Naive thymus-derived CD4-positive, alpha-beta T cell (primary cell): ENCODE measurements at regions of chr6 and their contacts with region 1.

Region 1: GRCh38 chr6:41779793-41780545 is at the start of gene FRS3:
- DNase-seq: peak; percentile 96 to 100 (median 97)
- ATAC-seq: peak; percentile 99
- H3K4me3 ChIP-seq: peak within 1 kb of the TSS; percentile 59
- H3K4me3 Mint-ChIP-seq: peak within 1 kb of the TSS; percentile 87 to 95 (median 90)
- H3K27ac ChIP-seq: peak within 1 kb of the TSS; percentile 65
- H3K27ac Mint-ChIP-seq: peak within 1 kb of the TSS; percentile 47 to 86 (median 72)
- H3K4me1 ChIP-seq: peaks cover 7 to 9% of the 10 kb centered on the region in 2 donors
- H3K4me1 Mint-ChIP-seq: peaks cover 10 to 26% (median 22%) of the 10 kb centered on the region in 7 donors
- H3K27me3 ChIP-seq: no peaks in the 10 kb centered on the region
- H3K27me3 Mint-ChIP-seq: peaks cover 0 to 24% (median 0%) of the 10 kb centered on the region in 5 donors
- total RNA-seq, gene FRS3: 5.1 to 10.6 (median 5.5) TPM

Region 2: DNA sequence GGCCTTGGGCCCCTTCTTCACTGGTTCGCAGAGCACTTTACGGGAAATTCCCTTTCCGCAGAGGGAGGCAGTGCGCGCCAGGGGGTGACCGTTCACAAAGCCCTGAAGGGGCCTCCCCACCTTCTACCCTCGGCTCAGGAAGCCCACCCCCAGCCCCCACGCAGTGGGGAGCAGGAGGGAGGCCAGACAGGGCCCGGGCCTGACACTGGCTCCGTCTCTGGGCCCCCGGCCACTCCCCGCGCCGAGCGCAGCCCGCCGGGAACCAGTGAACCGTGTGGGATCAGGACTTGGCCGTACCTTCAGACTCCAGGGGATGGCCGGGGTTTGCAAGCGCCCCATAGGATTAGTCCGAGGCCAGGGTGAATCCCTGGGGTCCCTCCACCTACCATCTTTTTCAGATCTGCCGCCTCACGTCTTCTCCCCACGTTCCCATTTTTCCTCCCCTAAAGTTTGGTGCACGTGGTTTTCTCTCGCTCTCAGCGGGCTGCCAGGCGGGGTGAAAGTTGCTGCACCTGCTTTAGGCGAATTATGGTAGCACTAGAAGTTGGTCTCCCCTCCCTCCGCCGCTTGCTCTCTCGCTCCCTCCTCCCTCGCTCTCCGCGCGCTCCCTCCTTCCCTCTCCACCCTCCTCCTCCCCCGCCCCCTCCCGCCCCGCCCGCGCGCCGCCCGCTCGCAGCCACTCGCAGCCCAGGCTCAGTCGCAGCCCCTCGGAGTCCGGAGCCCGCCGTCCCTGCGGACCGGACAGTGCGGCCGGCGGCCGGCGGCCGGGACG is 234.1 kb before region 1 on chr6 and contains the start of gene FOXP4:
- CTCF ChIA-PET with region 1: no interaction called
- POLR2A ChIA-PET with region 1: no interaction called
- intact Hi-C with region 1: no loop called
- DNase-seq: peak; percentile 45 to 83 (median 76)
- ATAC-seq: peak; percentile 95
- H3K4me3 ChIP-seq: peak within 1 kb of the TSS; percentile 64
- H3K4me3 Mint-ChIP-seq: peak within 1 kb of the TSS; percentile 91 to 96 (median 94)
- H3K27ac ChIP-seq: peak within 1 kb of the TSS; percentile 19
- H3K27ac Mint-ChIP-seq: peak within 1 kb of the TSS in 8 of 9 donors; percentile 7 to 86 (median 66)
- H3K4me1 ChIP-seq: peaks cover 20 to 27% of the 10 kb centered on the region in 2 donors
- H3K4me1 Mint-ChIP-seq: peaks cover 6 to 42% (median 25%) of the 10 kb centered on the region in 7 donors
- H3K27me3 ChIP-seq: peaks cover 2 to 9% of the 10 kb centered on the region in 2 donors
- H3K27me3 Mint-ChIP-seq: peaks cover 10 to 73% (median 16%) of the 10 kb centered on the region in 5 donors
- total RNA-seq, gene FOXP4: 3.1 to 7.6 (median 4.9) TPM

Region 3: DNA sequence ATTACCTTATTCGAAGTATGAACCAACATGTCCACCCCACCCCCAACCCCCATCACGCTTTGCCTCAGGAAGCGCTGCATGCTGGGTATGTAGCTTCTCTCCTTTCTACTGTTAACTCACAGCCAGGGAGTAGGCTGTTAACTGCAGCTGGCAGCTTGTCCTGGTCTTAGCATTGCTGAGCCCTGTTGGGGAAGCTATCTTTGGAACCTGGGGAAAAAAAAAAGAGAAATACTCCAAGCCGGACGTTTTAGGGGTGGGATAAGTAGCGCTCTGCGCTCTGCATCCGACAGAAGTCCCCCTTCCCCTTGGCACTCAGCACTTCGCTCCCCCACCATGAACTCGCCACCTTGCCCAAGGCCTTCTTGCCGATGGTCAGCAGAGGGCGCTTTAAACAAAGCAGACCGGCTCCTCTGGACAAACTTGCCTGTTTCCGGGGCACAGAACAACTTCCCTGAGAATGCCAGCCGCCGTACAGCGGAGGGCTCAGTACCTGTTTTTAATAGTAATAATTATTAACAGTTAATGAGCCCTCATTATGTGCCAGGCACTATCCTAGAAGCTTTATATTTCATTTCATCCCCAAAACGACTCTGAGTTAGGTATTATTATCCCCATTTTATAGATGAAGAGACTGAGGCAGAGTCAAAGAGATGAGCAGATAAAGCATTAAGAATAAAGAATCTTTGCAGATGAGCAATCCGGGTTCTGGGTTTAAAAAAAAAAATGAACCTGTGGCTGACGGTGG is 176.9 kb before region 1 on chr6:
- CTCF ChIA-PET with region 1: interaction called, 6 read pairs
- POLR2A ChIA-PET with region 1: no interaction called
- intact Hi-C with region 1: loop called (anchors 1 kb)
- DNase-seq: peak; percentile 49 to 78 (median 68)
- ATAC-seq: peak; percentile 86
- H3K4me3 ChIP-seq: no peak overlapping the region
- H3K4me3 Mint-ChIP-seq: peak overlapping the region in 6 of 10 donors; percentile 24 to 56 (median 34)
- H3K27ac ChIP-seq: no peak overlapping the region
- H3K27ac Mint-ChIP-seq: no peak overlapping the region
- H3K4me1 ChIP-seq: peaks cover 4 to 7% of the 10 kb centered on the region in 2 donors
- H3K4me1 Mint-ChIP-seq: peaks cover 4 to 7% (median 5%) of the 10 kb centered on the region in 7 donors
- H3K27me3 ChIP-seq: no peaks in the 10 kb centered on the region
- H3K27me3 Mint-ChIP-seq: peaks cover 0 to 7% (median 0%) of the 10 kb centered on the region in 5 donors

Region 4: GRCh38 chr6:41936073-41936837 is 156.3 kb after region 1 on chr6:
- CTCF ChIA-PET with region 1: no interaction called
- POLR2A ChIA-PET with region 1: no interaction called
- intact Hi-C with region 1: loop called (anchors 1 to 5 kb)
- DNase-seq: peak in 8 of 9 donors; percentile 52 to 72 (median 63)
- ATAC-seq: peak; percentile 79
- H3K4me3 ChIP-seq: peak overlapping the region; percentile 34
- H3K4me3 Mint-ChIP-seq: peak overlapping the region; percentile 64 to 100 (median 90)
- H3K27ac ChIP-seq: peak overlapping the region; percentile 76
- H3K27ac Mint-ChIP-seq: peak overlapping the region; percentile 85 to 95 (median 90)
- H3K4me1 ChIP-seq: peaks cover 57 to 61% of the 10 kb centered on the region in 2 donors
- H3K4me1 Mint-ChIP-seq: peaks cover 48 to 81% (median 74%) of the 10 kb centered on the region in 7 donors
- H3K27me3 ChIP-seq: no peaks in the 10 kb centered on the region
- H3K27me3 Mint-ChIP-seq: no peaks in the 10 kb centered on the region

Region 5: DNA sequence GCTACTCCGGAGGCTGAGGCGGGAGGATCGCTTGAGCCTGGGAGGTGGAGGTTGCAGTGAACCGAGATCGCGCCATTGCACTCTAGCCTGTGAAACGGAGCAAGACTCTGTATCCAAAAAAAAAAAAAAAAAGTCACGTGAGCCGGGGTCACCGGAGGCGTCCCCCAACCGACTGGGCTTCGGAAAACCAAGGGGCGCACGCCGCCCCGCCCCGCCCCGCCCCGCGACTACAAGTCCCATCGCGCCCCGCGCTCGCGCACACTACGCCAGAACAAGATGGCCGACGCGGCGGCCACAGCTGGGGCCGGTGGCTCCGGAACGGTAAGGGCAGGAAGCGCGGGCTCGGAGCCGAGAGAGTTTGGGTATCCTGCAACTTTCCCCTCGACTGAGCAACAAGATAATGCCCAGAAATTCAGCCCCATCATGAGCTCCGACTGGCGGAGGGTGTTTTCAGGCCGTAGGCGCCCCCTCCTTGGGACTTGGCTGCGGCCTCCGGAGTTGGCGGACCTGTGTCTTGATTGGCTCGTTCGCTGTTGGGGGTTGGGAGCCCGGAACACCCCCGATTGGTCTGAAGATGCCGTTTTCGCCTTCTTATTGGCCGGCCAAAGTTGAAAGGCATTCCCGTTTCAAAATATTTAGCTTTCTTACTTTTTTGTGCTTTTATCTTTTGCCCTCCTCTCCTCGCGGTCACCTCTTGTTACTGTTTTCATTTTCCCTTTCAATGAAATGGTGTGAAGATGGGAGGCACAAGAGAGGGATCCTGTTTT is 270.5 kb after region 1 on chr6 and contains the start of gene TAF8:
- CTCF ChIA-PET with region 1: interaction called, 49 read pairs
- POLR2A ChIA-PET with region 1: interaction called, 79 read pairs
- intact Hi-C with region 1: loop called in 1 of 2 experiments (anchors 1 kb)
- DNase-seq: peak; percentile 76 to 89 (median 87)
- ATAC-seq: peak; percentile 80
- H3K4me3 ChIP-seq: peak within 1 kb of the TSS; percentile 98
- H3K4me3 Mint-ChIP-seq: peak within 1 kb of the TSS; percentile 89 to 99 (median 99)
- H3K27ac ChIP-seq: peak within 1 kb of the TSS; percentile 78
- H3K27ac Mint-ChIP-seq: peak within 1 kb of the TSS; percentile 93 to 98 (median 97)
- H3K4me1 ChIP-seq: peaks cover 24 to 27% of the 10 kb centered on the region in 2 donors
- H3K4me1 Mint-ChIP-seq: peaks cover 36 to 70% (median 51%) of the 10 kb centered on the region in 7 donors
- H3K27me3 ChIP-seq: no peaks in the 10 kb centered on the region
- H3K27me3 Mint-ChIP-seq: no peaks in the 10 kb centered on the region
- total RNA-seq, gene TAF8: 41.6 to 58.2 (median 50.8) TPM

Region 6: GRCh38 chr6:42104095-42104806 is 324.3 kb after region 1 on chr6:
- CTCF ChIA-PET with region 1: no interaction called
- POLR2A ChIA-PET with region 1: no interaction called
- intact Hi-C with region 1: loop called (anchors 1 to 2 kb)
- DNase-seq: peak; percentile 39 to 79 (median 73)
- ATAC-seq: peak; percentile 90
- H3K4me3 ChIP-seq: peak overlapping the region; percentile 68
- H3K4me3 Mint-ChIP-seq: peak overlapping the region; percentile 66 to 89 (median 70)
- H3K27ac ChIP-seq: peak overlapping the region; percentile 41
- H3K27ac Mint-ChIP-seq: peak overlapping the region in 5 of 9 donors; percentile 20 to 78 (median 58)
- H3K4me1 ChIP-seq: peaks cover 0 to 4% of the 10 kb centered on the region in 2 donors
- H3K4me1 Mint-ChIP-seq: peaks cover 0 to 28% (median 9%) of the 10 kb centered on the region in 7 donors
- H3K27me3 ChIP-seq: no peaks in the 10 kb centered on the region
- H3K27me3 Mint-ChIP-seq: no peaks in the 10 kb centered on the region

Region 7: GRCh38 chr6:42217519-42218367 is 437.8 kb after region 1 on chr6 and contains the start of gene MRPS10:
- CTCF ChIA-PET with region 1: interaction called, 7 read pairs
- POLR2A ChIA-PET with region 1: interaction called, 3 read pairs
- intact Hi-C with region 1: loop called (anchors 1 kb)
- DNase-seq: peak; percentile 72 to 92 (median 87)
- ATAC-seq: peak; percentile 100
- H3K4me3 ChIP-seq: peak within 1 kb of the TSS; percentile 96
- H3K4me3 Mint-ChIP-seq: peak within 1 kb of the TSS; percentile 92 to 100 (median 98)
- H3K27ac ChIP-seq: peak within 1 kb of the TSS; percentile 77
- H3K27ac Mint-ChIP-seq: peak within 1 kb of the TSS; percentile 87 to 99 (median 97)
- H3K4me1 ChIP-seq: peaks cover 9 to 14% of the 10 kb centered on the region in 2 donors
- H3K4me1 Mint-ChIP-seq: peaks cover 7 to 34% (median 24%) of the 10 kb centered on the region in 7 donors
- H3K27me3 ChIP-seq: no peaks in the 10 kb centered on the region
- H3K27me3 Mint-ChIP-seq: no peaks in the 10 kb centered on the region
- total RNA-seq, gene MRPS10: 17.0 to 30.3 (median 25.3) TPM

Region 8: DNA sequence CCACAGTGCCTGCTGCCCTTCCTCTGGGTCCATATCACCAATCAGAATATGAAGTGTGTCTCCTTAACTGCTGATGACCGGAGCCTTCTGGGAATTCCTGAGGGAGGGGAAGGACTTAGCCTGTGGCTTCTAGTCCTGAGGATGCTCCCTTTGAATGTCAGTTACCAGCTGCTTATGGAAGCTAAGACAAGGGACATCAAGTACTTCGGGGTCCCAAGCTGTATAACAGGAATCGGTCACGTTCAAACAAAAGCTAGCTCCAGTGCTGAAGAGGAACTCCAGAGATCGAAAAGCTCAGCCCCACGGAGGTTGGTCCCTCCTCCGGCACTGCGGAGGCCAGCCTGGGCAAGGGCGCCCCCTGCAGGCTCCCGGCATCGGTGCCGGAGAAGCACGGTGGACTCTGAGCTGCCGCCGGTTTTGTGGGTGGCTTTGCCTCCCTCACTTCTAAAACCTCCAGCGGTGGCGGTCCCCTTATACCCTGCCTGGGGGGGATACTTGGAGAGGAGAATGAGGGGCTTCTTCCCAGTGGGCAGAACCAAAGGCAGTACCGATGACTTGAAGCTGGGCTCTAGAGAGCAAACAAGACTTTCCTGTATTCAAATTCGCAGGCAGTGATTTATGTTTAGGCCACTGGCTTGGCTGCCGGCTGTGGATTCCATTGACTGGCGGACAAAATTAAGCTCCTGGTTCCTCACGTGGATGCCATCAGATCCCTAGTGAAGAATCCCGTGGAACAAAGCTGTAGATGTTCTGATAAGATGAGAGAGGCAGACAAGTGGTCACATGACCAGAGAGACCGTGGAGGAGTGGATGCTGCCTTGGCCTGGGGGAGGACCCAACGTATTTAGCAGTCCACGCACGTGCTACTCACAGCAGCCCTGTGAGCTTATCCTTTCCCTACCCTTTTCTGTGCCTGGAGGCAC is 767.7 kb after region 1 on chr6:
- CTCF ChIA-PET with region 1: no interaction called
- POLR2A ChIA-PET with region 1: no interaction called
- intact Hi-C with region 1: loop called in 1 of 2 experiments (anchors 1 kb)
- DNase-seq: peak; percentile 73 to 94 (median 86)
- ATAC-seq: peak; percentile 100
- H3K4me3 ChIP-seq: peak overlapping the region; percentile 52
- H3K4me3 Mint-ChIP-seq: peak overlapping the region; percentile 23 to 78 (median 68)
- H3K27ac ChIP-seq: peak overlapping the region; percentile 26
- H3K27ac Mint-ChIP-seq: peak overlapping the region in 7 of 9 donors; percentile 42 to 74 (median 48)
- H3K4me1 ChIP-seq: peaks cover 5 to 13% of the 10 kb centered on the region in 2 donors
- H3K4me1 Mint-ChIP-seq: peaks cover 5 to 14% (median 12%) of the 10 kb centered on the region in 7 donors
- H3K27me3 ChIP-seq: no peaks in the 10 kb centered on the region
- H3K27me3 Mint-ChIP-seq: peaks cover 0 to 12% (median 9%) of the 10 kb centered on the region in 5 donors